H1 (cell line): ENCODE measurements at regions of chr17 and their contacts with region 1.

Region 1: DNA sequence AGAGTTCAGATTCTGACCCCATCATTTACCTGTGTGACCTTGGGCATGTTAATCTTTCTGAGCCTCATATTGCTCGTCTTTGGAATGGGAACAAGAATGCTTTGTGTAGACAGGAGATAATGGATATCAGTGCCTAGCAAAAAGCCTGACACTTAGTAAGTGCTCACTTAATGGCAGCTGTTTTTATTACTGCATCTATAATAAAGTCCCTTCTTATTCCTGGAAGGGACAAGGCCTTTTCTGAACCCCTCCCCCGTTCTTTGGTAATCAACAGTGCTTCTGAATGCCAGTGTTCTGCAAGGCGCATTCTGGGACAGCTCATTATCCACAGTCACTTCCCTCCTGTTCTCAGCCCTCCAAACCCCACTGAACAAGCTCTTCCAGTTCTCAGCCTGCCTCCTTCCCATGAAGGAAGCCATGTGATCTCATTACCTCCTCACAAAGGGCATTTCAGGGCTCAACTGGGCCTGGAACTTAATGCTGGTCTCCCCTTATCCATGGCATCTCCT is 25.1 kb upstream of the SUPT4H1 start:
- DNase-seq: peak in 1 of 2 experiments; percentile 36
- H3K4me3 ChIP-seq: no peak overlapping the region
- H3K27ac ChIP-seq: no peak overlapping the region
- H3K4me1 ChIP-seq: peaks cover 6 to 15% (median 10%) of the 10 kb centered on the region in 4 experiments; a peak in 5 of 7 replicates
- H3K27me3 ChIP-seq: no peaks in the 10 kb centered on the region
- CTCF ChIP-seq: no peak
- EP300 ChIP-seq: no peak
- POLR2A ChIP-seq: no peak
- RAD21 ChIP-seq: no peak

Region 2: GRCh38 chr17:58387834-58388233 is 10.7 kb after region 1 on chr17:
- CTCF ChIA-PET with region 1: interaction called, 14 read pairs
- POLR2A ChIA-PET with region 1: no interaction called
- DNase-seq: no peak
- H3K4me3 ChIP-seq: no peak overlapping the region
- H3K27ac ChIP-seq: no peak overlapping the region
- H3K4me1 ChIP-seq: peaks cover 3 to 18% (median 6%) of the 10 kb centered on the region in 4 experiments; a peak in 5 of 7 replicates
- H3K27me3 ChIP-seq: no peaks in the 10 kb centered on the region; a peak in 1 of 7 replicates
- CTCF ChIP-seq: no peak
- EP300 ChIP-seq: no peak
- POLR2A ChIP-seq: no peak
- RAD21 ChIP-seq: no peak

Region 3: DNA sequence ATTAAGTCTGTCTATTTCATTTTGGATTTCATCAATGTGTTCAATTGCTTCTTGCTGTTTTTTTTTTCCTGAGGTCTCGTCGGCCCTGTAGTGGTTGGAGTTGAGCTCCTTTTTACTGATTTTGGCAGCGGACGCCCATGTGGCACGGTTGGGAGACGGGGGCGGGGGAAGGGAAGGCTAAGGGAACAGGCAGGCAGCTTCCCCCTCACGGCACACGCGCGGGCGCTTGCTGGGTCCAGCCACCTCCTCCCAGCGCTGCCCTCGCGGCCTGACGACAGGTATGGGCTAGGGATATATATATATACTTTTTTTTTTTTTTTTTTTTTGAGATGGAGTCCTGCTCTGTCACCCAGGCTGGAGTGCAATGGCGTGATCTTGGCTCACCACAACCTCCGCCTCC is 99.7 kb after region 1 on chr17:
- CTCF ChIA-PET with region 1: no interaction called
- POLR2A ChIA-PET with region 1: no interaction called
- DNase-seq: no peak
- H3K4me3 ChIP-seq: no peak overlapping the region
- H3K27ac ChIP-seq: no peak overlapping the region
- H3K4me1 ChIP-seq: no peaks in the 10 kb centered on the region
- H3K27me3 ChIP-seq: no peaks in the 10 kb centered on the region; a peak in 1 of 7 replicates
- CTCF ChIP-seq: no peak
- EP300 ChIP-seq: no peak
- POLR2A ChIP-seq: no peak
- RAD21 ChIP-seq: no peak